Activated CD4-positive, alpha-beta memory T cell treated with anti-CD3 and anti-CD28 coated beads for 36 hours (primary cell): ENCODE measurements at regions of chr4 and their contacts with region 1.

Region 1: DNA sequence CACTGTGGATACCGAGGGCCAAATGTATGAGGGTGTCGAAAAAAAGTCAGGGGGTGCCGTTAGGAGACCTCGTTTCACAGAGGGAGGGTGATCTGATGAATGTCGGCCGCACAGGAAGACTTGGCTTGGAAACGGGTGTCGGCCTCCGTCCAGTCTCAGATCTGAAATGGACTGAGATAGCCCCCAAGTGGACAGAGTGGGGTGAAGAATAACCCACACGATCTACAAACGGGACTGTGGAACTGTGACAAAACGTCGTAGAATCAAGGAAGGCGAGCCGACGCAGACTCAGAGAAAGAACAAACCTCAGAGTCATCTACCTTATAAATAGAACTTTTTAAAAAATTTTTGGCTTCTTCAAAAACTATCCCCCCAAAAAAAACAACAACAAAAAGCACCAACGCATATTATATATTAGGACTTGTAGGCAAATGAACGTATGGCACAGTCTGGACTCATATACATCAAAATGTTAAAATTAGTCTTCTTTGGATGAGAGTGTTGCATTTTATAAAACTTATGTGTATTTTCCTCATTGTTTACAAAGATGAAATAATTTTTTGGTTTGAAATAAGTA is 63.8 kb upstream of the IRF2 start:
- DNase-seq: peak; percentile 75
- H3K4me3 Mint-ChIP-seq: peak overlapping the region; percentile 95
- H3K27ac Mint-ChIP-seq: peak overlapping the region; percentile 96
- H3K4me1 Mint-ChIP-seq: peaks cover 38% of the 10 kb centered on the region
- H3K27me3 Mint-ChIP-seq: no peaks in the 10 kb centered on the region

Region 2: DNA sequence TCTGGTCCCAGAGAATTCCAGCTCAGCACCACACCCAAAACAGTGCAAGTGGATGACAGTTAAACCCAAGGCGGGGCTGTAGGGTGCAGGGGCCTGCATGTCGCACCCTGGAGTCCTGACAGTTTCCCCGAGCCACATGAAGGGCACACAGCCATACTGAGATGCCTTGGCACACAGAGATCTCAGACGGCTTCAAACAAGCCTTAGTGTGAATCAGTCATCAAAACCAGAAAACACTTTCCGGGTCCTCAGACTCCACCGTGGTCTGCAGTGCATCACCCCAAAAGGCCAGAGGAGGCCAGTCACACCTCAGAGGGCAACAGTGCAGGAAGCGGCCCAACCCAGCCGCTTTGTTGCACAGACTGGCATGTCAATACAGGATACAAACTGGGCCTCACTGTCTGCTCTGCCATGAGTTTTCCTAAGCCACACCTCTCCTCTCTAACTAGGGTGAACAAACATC is 255.8 kb before region 1 on chr4:
- CTCF ChIA-PET with region 1: interaction called, 5 read pairs
- POLR2A ChIA-PET with region 1: interaction called, 4 read pairs
- intact Hi-C with region 1: loop called (anchors 1 kb)
- DNase-seq: peak; percentile 87
- H3K4me3 Mint-ChIP-seq: peak overlapping the region; percentile 10
- H3K27ac Mint-ChIP-seq: peak overlapping the region; percentile 91
- H3K4me1 Mint-ChIP-seq: peaks cover 71% of the 10 kb centered on the region
- H3K27me3 Mint-ChIP-seq: peaks cover 4% of the 10 kb centered on the region

Region 3: GRCh38 chr4:184310171-184310567 is 227.9 kb before region 1 on chr4:
- CTCF ChIA-PET with region 1: interaction called, 3 read pairs
- POLR2A ChIA-PET with region 1: interaction called, 3 read pairs
- intact Hi-C with region 1: loop called (anchors 1 kb)
- DNase-seq: peak; percentile 81
- H3K4me3 Mint-ChIP-seq: peak overlapping the region; percentile 4
- H3K27ac Mint-ChIP-seq: peak overlapping the region; percentile 72
- H3K4me1 Mint-ChIP-seq: peaks cover 52% of the 10 kb centered on the region
- H3K27me3 Mint-ChIP-seq: no peaks in the 10 kb centered on the region

Region 4: DNA sequence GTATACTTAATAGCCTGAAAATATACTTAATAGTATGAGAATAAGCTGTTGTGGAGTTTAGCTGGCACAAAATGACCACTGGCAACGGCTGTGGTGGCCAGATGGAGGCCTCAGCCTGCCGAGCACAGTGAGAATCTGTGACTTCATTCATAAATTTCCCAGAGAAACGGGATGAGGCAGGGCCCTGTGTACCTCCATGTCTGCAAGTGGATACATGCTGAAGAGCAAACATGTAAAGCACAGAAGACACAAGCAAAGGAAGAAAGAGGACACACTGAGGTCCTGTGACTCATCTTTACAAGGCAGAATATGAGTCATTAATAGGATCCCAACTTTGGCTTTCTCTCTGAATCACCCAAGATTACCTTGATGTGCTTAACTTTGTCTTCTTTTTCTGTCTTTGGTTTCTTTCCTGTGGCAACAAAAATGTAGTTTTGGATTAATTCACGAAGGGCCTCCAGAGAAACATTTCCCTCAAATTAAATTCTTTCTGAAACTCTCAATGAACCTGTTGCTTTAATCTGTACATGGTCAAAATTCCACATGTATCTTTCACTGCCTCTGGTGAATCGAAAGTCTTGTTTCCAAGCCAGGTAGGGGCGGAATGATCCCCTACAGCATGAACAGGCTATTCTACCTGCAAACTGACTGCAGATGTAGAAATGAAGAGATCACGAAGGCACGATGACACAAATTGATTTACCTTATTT is 120.2 kb before region 1 on chr4:
- CTCF ChIA-PET with region 1: interaction called, 3 read pairs
- POLR2A ChIA-PET with region 1: interaction called, 6 read pairs
- intact Hi-C with region 1: loop called (anchors 1 kb)
- DNase-seq: peak; percentile 23
- H3K4me3 Mint-ChIP-seq: peak overlapping the region; percentile 23
- H3K27ac Mint-ChIP-seq: peak overlapping the region; percentile 91
- H3K4me1 Mint-ChIP-seq: peaks cover 90% of the 10 kb centered on the region
- H3K27me3 Mint-ChIP-seq: no peaks in the 10 kb centered on the region

Region 5: GRCh38 chr4:184514121-184514988 is 23.8 kb before region 1 on chr4:
- CTCF ChIA-PET with region 1: interaction called, 30 read pairs
- POLR2A ChIA-PET with region 1: interaction called, 34 read pairs
- intact Hi-C with region 1: loop called (anchors 1 kb)
- DNase-seq: peak; percentile 90
- H3K4me3 Mint-ChIP-seq: peak overlapping the region; percentile 38
- H3K27ac Mint-ChIP-seq: peak overlapping the region; percentile 88
- H3K4me1 Mint-ChIP-seq: peaks cover 42% of the 10 kb centered on the region
- H3K27me3 Mint-ChIP-seq: no peaks in the 10 kb centered on the region

Region 6: GRCh38 chr4:184548648-184549341 is 10.7 kb after region 1 on chr4:
- CTCF ChIA-PET with region 1: no interaction called
- POLR2A ChIA-PET with region 1: no interaction called
- intact Hi-C with region 1: no loop called
- DNase-seq: no peak
- H3K4me3 Mint-ChIP-seq: no peak overlapping the region
- H3K27ac Mint-ChIP-seq: no peak overlapping the region
- H3K4me1 Mint-ChIP-seq: peaks cover 3% of the 10 kb centered on the region
- H3K27me3 Mint-ChIP-seq: peaks cover 5% of the 10 kb centered on the region

Region 7: GRCh38 chr4:184563621-184564020 is 25.5 kb after region 1 on chr4:
- CTCF ChIA-PET with region 1: no interaction called
- POLR2A ChIA-PET with region 1: no interaction called
- intact Hi-C with region 1: no loop called
- DNase-seq: no peak
- H3K4me3 Mint-ChIP-seq: no peak overlapping the region
- H3K27ac Mint-ChIP-seq: no peak overlapping the region
- H3K4me1 Mint-ChIP-seq: no peaks in the 10 kb centered on the region
- H3K27me3 Mint-ChIP-seq: peaks cover 2% of the 10 kb centered on the region

Region 8: DNA sequence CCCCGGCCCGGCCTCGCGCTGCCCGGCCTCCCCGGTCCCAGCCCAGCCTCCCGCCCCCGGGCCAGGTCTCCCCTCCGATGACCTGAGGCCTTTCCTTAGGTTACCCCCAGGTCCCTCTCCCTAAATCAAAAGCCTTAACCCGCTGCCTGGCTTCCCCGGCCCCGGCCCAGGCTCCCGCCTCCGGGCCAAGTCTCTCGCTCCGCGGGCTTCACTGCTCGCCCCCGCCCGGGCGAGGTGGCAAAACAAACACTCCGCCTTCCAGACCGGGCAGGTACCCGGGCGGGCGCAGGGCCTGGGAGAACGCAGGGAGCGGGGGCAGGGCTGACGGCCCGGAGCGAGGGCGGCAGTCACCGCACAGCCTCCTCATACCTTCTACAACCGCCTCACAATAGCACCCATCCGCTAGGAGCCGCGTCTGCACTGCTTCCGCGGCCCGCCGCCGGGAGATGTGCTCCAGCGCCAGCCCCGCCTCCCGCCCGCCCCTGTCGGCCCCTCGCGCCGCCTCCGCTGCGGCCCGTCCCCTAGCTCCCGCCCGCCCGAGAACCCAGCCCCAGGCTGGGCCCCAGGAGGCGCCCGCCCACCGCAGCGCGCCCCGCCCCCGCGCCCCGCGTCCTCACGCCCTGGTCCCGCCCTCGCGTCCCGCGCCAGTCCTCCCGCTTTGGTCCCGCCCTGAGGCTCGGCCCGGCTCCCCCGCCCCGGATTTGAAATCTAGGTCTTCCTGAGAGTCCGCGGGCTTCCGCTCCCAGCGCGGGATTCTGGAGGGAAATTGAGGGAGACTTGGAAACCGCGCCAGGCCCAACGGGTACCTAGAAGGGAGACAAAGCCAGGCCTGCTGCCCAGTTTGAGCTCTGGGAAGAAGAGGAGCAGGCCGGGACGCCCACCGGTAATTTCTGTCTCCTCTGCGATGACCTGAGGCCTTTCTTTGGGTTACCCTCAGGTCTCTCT is 111.2 kb after region 1 on chr4 and contains the starts of genes CASP3 and PRIMPOL:
- CTCF ChIA-PET with region 1: interaction called, 3 read pairs
- POLR2A ChIA-PET with region 1: interaction called, 7 read pairs
- intact Hi-C with region 1: loop called (anchors 1 kb)
- DNase-seq: peak; percentile 98
- H3K4me3 Mint-ChIP-seq: peak within 1 kb of the TSS; percentile 91
- H3K27ac Mint-ChIP-seq: peak within 1 kb of the TSS; percentile 91
- H3K4me1 Mint-ChIP-seq: peaks cover 50% of the 10 kb centered on the region
- H3K27me3 Mint-ChIP-seq: no peaks in the 10 kb centered on the region
- total RNA-seq, gene CASP3: 54.0 to 54.4 TPM
- total RNA-seq, gene PRIMPOL: 23.1 to 27.1 TPM